Right ventricle myocardium superior (tissue), 1 donor: ENCODE measurements at regions of chr10 and their contacts with region 1.

Region 1: GRCh38 chr10:120942806-120943413 is 91.7 kb downstream of the WDR11 start:
- DNase-seq: peak; percentile 87
- ATAC-seq: peak; percentile 96

Region 2: GRCh38 chr10:121734589-121735045 is 791.7 kb after region 1 on chr10:
- intact Hi-C with region 1: loop called (anchors 10 kb)
- DNase-seq: no peak
- ATAC-seq: peak; percentile 31